B cell (primary cell): ENCODE measurements at regions of chr1 and their contacts with region 1.

Region 1: DNA sequence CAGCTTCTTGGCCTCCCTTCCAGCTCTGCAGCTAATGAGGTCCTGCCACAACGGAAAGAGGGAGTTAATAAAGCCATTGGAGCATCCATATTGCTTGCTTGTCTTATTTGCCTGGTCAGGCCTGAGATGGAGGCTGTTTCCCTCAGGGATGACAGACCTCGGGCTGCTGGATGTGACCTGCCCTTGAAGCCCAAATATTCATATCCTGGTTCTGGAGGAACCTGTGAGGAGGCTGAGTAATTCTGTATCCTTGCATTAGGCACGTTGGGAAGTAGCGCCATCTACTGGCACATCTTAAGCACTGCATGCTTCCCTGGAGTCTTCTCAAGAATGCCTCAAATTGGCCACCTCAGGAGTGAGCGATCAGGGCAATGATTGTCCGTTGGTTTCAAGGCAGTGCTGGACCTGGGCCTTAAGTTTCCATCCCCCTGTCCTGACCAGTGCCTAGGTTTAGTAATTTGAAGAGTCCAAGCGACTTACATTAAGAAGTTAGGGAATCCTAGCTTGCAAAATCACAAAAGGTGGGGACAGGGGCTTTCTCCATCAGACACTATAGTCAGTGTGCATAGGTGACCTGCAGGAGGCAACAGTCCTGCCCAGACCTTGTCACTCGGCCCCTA is 13.8 kb upstream of the NASP start:
- DNase-seq: peak; percentile 85
- ATAC-seq: peak; percentile 97
- H3K4me3 ChIP-seq: no peak overlapping the region
- H3K4me3 Mint-ChIP-seq: no peak overlapping the region
- H3K27ac ChIP-seq: peak overlapping the region in 1 of 2 donors; percentile 0
- H3K27ac Mint-ChIP-seq: peak overlapping the region; percentile 56
- H3K4me1 ChIP-seq: no peaks in the 10 kb centered on the region
- H3K4me1 Mint-ChIP-seq: peaks cover 2% of the 10 kb centered on the region
- H3K27me3 ChIP-seq: no peaks in the 10 kb centered on the region
- H3K27me3 Mint-ChIP-seq: no peaks in the 10 kb centered on the region
- CTCF ChIP-seq: peak; percentile 99

Region 2: DNA sequence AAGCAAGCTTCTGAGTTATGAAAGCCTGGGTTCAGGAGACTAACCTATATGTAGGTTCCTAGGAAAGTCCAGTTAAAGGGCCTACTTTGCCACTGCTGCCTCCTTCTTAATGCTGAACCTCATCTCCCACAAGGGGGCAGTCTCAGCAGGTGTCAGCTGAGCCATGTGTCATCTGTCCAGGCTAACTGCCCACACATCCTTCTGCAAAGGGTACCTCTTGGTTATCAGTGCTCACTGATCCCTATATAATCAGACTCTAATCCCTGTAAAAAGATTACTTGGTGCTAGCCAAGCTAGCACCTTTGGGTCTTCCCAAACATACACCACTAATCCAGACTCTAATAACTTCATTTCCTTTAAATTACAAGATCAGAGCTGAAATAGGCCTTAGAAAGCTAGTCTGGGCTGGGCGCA is 57.4 kb before region 1 on chr1:
- CTCF ChIA-PET with region 1: interaction called, 351 read pairs
- POLR2A ChIA-PET with region 1: interaction called, 3 read pairs
- intact Hi-C with region 1: loop called (anchors 1 kb)
- DNase-seq: peak; percentile 76
- ATAC-seq: peak; percentile 66
- H3K4me3 ChIP-seq: no peak overlapping the region
- H3K4me3 Mint-ChIP-seq: no peak overlapping the region
- H3K27ac ChIP-seq: no peak overlapping the region
- H3K27ac Mint-ChIP-seq: peak overlapping the region; percentile 76
- H3K4me1 ChIP-seq: no peaks in the 10 kb centered on the region
- H3K4me1 Mint-ChIP-seq: peaks cover 8% of the 10 kb centered on the region
- H3K27me3 ChIP-seq: no peaks in the 10 kb centered on the region
- H3K27me3 Mint-ChIP-seq: no peaks in the 10 kb centered on the region
- CTCF ChIP-seq: peak; percentile 89

Region 3: DNA sequence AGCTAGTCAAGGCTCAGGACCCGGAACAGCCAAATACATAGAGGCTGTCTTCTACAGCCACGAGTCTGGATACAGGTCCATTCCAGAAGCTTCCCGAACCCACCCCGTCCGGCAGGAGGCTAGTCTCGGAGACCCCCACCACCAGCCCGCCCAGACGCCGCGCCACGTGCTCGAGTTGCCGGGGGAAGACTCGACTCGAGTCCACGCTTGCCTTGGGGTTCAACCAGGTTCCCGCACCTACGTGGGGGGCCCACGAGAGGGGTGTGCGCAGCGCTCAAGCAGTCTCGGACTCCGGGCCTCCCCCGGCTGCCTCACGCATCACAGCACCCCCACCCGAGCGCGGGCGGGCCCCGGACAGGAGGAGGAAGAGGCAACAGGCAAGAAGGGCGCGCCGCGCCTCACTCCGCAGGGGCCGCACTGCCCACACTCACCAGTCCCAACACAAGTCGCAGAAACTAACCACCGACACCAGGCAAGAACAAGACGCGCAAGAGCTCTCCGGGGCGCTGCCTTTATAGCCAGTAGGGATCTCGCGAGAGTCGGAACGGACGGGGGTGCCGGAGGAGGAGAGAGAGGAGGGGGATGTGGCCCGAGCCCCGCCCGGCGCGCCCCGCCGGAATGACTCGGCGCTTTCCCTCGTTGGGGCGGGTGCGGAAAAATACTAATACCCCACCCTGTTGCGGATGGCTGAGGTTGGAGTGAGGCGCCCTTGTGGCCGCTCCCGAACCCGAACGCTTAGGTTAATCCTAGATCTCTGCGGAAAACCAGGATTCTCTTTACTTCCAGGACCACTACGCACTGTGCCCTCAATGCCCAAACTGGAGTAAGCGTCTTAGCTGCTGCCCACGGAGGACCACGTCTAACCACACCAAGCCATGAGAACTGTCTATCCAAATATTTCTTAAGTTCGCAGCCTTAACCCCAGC is 48.4 kb before region 1 on chr1 and contains the start of gene PRDX1:
- CTCF ChIA-PET with region 1: interaction called, 110 read pairs
- POLR2A ChIA-PET with region 1: interaction called, 14 read pairs
- intact Hi-C with region 1: loop called (anchors 2 kb)
- DNase-seq: peak; percentile 98
- ATAC-seq: peak; percentile 86
- H3K4me3 ChIP-seq: peak within 1 kb of the TSS; percentile 75 to 97 (median 82)
- H3K4me3 Mint-ChIP-seq: peak within 1 kb of the TSS; percentile 95
- H3K27ac ChIP-seq: peak within 1 kb of the TSS; percentile 80 to 82
- H3K27ac Mint-ChIP-seq: peak within 1 kb of the TSS; percentile 98
- H3K4me1 ChIP-seq: peaks cover 16 to 31% of the 10 kb centered on the region in 2 donors
- H3K4me1 Mint-ChIP-seq: peaks cover 34% of the 10 kb centered on the region
- H3K27me3 ChIP-seq: no peaks in the 10 kb centered on the region
- H3K27me3 Mint-ChIP-seq: no peaks in the 10 kb centered on the region
- CTCF ChIP-seq: no peak
- total RNA-seq, gene PRDX1: 96.5 and 104 TPM in 2 replicates

Region 4: DNA sequence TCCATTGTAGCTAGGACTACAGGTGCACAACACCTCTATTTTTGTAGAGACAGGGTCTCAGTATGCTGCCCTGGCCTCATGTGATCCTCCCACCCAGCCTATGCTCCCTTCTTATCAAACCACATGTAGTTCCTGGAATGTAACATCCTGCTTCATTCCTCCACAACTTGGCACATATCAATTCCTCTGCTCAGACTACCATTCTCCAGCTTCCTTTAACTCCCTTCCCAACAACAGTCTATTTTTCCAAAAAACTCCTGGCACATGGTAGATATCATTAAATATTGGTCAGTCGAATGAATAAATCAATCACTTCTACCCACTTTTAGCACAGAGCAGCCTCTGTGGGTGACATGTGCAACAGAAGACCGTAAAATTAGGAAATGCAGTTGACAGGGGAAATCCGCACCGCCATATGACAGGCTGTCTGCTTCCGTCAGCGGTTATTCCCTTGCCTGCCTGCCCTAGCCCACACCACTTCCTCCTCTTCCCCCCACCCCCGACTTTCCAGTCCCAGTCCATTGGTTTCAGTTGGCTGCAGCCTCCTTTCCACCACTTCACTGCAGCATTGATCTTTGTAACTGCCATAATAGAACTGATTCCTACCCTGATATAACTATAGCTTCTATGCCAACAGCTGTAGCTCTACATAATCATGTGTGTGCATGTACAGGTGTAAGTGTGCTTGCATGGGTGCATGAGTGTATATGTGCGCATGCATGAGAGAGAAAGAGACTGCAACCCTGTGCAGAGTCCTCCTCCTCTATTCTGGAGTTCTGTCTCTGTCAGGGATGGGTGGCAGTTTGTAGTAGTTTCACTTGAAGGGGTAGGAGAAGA is 26.3 kb before region 1 on chr1:
- CTCF ChIA-PET with region 1: interaction called, 38 read pairs
- POLR2A ChIA-PET with region 1: interaction called, 8 read pairs
- intact Hi-C with region 1: no loop called
- DNase-seq: peak; percentile 94
- ATAC-seq: peak; percentile 90
- H3K4me3 ChIP-seq: peak overlapping the region in 4 of 5 experiments; percentile 22 to 56 (median 30)
- H3K4me3 Mint-ChIP-seq: peak overlapping the region; percentile 81
- H3K27ac ChIP-seq: peak overlapping the region; percentile 78 to 97
- H3K27ac Mint-ChIP-seq: peak overlapping the region; percentile 82
- H3K4me1 ChIP-seq: peaks cover 38 to 57% of the 10 kb centered on the region in 2 donors
- H3K4me1 Mint-ChIP-seq: peaks cover 46% of the 10 kb centered on the region
- H3K27me3 ChIP-seq: no peaks in the 10 kb centered on the region
- H3K27me3 Mint-ChIP-seq: no peaks in the 10 kb centered on the region
- CTCF ChIP-seq: no peak

Region 5: DNA sequence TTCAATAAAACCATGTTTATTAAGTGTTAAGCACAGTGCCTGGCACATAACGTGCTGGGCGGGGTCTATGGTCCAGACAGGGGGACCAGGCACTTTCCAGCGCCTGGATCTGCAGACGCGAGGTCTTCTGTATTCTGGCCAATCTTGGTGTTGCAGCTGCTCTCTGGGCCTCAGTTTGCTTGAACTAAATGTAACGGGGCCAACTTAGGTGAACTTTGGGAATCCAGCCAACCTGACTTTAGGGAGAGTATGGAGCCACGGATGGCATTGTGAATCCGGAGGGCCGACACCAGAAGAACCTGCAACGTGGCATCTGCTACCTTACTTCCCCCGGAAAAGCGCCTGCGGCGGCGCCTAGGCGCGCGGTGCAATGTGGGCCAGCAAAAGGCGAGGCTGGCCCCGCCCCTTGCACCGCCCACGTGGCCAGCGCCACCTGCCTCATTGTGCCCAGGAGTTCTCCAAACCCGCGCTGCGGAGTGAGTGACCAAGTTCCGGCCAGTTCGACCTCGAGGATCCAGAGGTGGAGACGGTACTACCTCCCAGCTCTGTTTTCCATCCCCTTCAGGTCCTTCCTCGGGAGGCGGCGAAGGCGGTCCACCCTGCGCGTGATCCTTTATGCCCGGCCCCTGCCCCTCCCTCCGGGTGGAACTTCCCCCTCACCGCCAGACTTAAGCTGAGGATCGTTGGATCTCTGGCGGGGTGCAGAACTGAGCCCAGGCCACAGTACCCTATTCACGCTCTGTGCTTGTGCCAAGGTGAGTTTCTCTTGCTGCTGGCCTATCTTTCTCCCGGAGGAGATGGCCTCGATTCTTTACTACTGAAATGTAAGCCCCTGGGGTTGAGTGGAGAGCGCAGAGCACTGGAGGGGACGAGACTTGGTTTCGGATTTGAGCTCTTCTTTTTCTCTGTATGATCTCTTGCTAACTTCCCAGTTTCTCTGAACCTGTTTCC is 19.4 kb before region 1 on chr1 and contains the start of gene AKR1A1:
- CTCF ChIA-PET with region 1: interaction called, 38 read pairs
- POLR2A ChIA-PET with region 1: no interaction called
- intact Hi-C with region 1: loop called (anchors 1 kb)
- DNase-seq: peak; percentile 96
- ATAC-seq: peak; percentile 93
- H3K4me3 ChIP-seq: peak within 1 kb of the TSS; percentile 65 to 100 (median 90)
- H3K4me3 Mint-ChIP-seq: peak within 1 kb of the TSS; percentile 97
- H3K27ac ChIP-seq: peak within 1 kb of the TSS; percentile 84 to 96
- H3K27ac Mint-ChIP-seq: peak within 1 kb of the TSS; percentile 96
- H3K4me1 ChIP-seq: peaks cover 23 to 28% of the 10 kb centered on the region in 2 donors
- H3K4me1 Mint-ChIP-seq: peaks cover 30% of the 10 kb centered on the region
- H3K27me3 ChIP-seq: no peaks in the 10 kb centered on the region
- H3K27me3 Mint-ChIP-seq: no peaks in the 10 kb centered on the region
- CTCF ChIP-seq: no peak
- total RNA-seq, gene AKR1A1: 101 and 145 TPM in 2 replicates

Region 6: GRCh38 chr1:45557422-45557944 is 12.6 kb before region 1 on chr1:
- CTCF ChIA-PET with region 1: interaction called, 12 read pairs
- POLR2A ChIA-PET with region 1: interaction called, 4 read pairs
- intact Hi-C with region 1: no loop called
- DNase-seq: no peak
- ATAC-seq: no peak
- H3K4me3 ChIP-seq: no peak overlapping the region
- H3K4me3 Mint-ChIP-seq: no peak overlapping the region
- H3K27ac ChIP-seq: peak overlapping the region in 1 of 2 donors; percentile 34
- H3K27ac Mint-ChIP-seq: peak overlapping the region; percentile 50
- H3K4me1 ChIP-seq: peaks cover under 1 to 2% of the 10 kb centered on the region in 2 donors
- H3K4me1 Mint-ChIP-seq: peaks cover 11% of the 10 kb centered on the region
- H3K27me3 ChIP-seq: no peaks in the 10 kb centered on the region
- H3K27me3 Mint-ChIP-seq: no peaks in the 10 kb centered on the region
- CTCF ChIP-seq: no peak

Region 7: GRCh38 chr1:45621501-45621836 is 51.4 kb after region 1 on chr1:
- CTCF ChIA-PET with region 1: no interaction called
- POLR2A ChIA-PET with region 1: no interaction called
- intact Hi-C with region 1: no loop called
- DNase-seq: no peak
- ATAC-seq: no peak
- H3K4me3 ChIP-seq: no peak overlapping the region
- H3K4me3 Mint-ChIP-seq: no peak overlapping the region
- H3K27ac ChIP-seq: no peak overlapping the region
- H3K27ac Mint-ChIP-seq: peak overlapping the region; percentile 15
- H3K4me1 ChIP-seq: peaks cover 0 to 2% of the 10 kb centered on the region in 2 donors
- H3K4me1 Mint-ChIP-seq: peaks cover 8% of the 10 kb centered on the region
- H3K27me3 ChIP-seq: no peaks in the 10 kb centered on the region
- H3K27me3 Mint-ChIP-seq: no peaks in the 10 kb centered on the region
- CTCF ChIP-seq: no peak